Upper lobe of right lung (tissue), 1 donor: ENCODE measurements at regions of chr3 and their contacts with region 1.

Region 1: GRCh38 chr3:186920301-186920700 is 10.0 kb upstream of the ST6GAL1 start:
- DNase-seq: no peak
- ATAC-seq: no peak
- H3K4me3 ChIP-seq: no peak overlapping the region
- H3K27ac ChIP-seq: no peak overlapping the region
- H3K4me1 ChIP-seq: no peaks in the 10 kb centered on the region
- H3K27me3 ChIP-seq: no peaks in the 10 kb centered on the region
- CTCF ChIP-seq: no peak

Region 2: GRCh38 chr3:186852994-186853393 is 67.3 kb before region 1 on chr3:
- intact Hi-C with region 1: loop called (anchors 10 kb)
- DNase-seq: no peak
- ATAC-seq: no peak
- H3K4me3 ChIP-seq: no peak overlapping the region
- H3K27ac ChIP-seq: no peak overlapping the region
- H3K4me1 ChIP-seq: no peaks in the 10 kb centered on the region
- H3K27me3 ChIP-seq: no peaks in the 10 kb centered on the region
- CTCF ChIP-seq: no peak